Sciatic nerve (tissue), 2 donors: ENCODE measurements at regions of chr11 and their contacts with region 1.

Region 1: DNA sequence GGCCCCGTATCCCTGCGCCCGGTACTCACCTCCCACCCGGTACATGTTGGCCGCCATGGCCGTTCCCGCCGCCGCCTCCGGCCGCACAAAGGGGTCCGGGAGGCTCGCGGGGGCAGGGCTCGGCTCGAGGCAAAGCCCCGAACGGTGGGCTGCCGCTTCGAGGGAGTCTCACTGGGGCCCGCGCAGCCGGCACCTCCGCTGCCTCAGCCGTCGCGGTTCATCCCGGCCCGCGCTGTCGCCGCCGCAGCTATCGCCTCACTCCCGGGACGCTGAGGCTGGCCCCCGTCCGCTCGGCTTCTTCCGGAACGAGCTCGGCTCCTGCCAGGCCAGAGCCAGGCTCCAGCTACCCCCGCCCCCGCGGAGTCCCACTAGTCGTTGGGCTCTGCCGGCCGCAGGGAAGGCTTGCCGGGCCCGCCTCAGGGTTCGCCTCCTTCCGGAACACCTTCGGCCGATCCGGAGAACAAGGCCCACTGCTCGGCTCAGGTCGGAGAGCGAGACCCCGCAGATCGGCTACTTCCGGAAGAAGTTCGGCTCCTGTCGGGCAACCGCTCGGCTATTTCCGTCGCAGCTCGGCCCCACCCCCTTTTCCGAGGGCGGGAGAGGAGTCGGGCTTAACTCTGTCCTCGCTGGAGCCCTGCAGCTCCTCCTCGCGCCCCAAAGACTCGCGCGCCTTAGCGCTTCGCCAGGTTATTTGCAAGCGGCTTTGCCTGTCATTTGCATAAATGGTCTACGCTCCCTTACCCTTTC is at the start of gene MTA2:
- DNase-seq: peak; percentile 99
- ATAC-seq: peak; percentile 91
- total RNA-seq, gene MTA2: 86.6 TPM

Region 2: DNA sequence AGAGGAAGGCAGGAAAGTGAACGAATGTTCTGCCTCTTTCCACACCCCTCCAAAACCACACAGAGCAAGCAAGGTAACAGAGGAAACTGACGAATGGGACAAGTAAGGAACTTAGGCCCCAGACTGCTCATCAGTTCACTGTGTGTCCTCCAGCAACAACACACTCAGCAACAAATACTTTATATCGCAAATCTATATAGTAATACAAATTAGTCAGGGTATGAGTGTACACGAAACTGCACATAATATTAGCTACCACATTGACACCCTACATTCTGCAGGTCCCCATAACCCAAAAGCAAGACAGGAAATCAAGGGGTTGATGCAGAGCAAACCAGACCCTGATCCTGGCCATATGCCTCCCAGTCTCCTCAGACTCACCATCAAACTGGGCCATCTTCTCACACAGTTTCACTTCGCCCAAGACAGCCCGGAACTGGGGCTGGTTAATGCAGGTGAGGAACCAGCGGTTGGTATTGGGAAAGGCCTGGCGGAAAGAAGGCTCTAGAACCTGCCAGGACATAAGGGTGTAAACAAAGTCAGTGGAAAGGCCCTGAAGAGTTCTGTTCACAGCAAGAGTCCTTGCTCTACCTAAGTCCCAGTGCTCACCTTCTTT is 34.4 kb before region 1 on chr11:
- intact Hi-C with region 1: no loop called
- DNase-seq: no peak
- ATAC-seq: no peak

Region 3: GRCh38 chr11:62694455-62695167 is 93.0 kb after region 1 on chr11:
- intact Hi-C with region 1: loop called (anchors 1 kb)
- DNase-seq: peak; percentile 88
- ATAC-seq: peak; percentile 82